Activated naive CD4-positive, alpha-beta T cell treated with anti-CD3 and anti-CD28 coated beads for 36 hours (primary cell): ENCODE measurements at regions of chr20 and their contacts with region 1.

Region 1: DNA sequence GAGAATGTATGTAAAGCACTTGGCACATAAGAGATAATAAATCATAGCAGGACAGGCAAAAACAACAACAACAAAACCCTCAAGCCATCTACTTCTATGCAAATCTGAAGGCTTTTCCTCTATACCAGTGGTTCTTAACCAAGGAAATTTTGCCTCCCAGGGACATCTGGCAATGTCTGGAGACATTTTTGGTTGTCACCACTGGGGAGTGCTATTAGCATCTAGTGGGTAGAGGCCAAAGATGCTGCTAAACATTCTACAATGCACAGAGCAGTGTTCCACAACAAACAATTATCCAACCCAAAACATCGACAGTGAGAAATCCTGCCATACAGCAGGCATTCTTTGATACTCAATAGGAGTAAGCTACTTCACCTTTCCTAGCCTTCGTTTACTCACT is 28.2 kb downstream of the NDRG3 start:
- DNase-seq: peak; percentile 43
- H3K4me3 Mint-ChIP-seq: no peak overlapping the region
- H3K27ac Mint-ChIP-seq: no peak overlapping the region
- H3K4me1 Mint-ChIP-seq: peaks cover 12% of the 10 kb centered on the region
- H3K27me3 Mint-ChIP-seq: no peaks in the 10 kb centered on the region

Region 2: GRCh38 chr20:36745927-36746659 is 28.4 kb after region 1 on chr20 and contains the start of gene NDRG3:
- CTCF ChIA-PET with region 1: no interaction called
- intact Hi-C with region 1: loop called (anchors 1 kb)
- DNase-seq: peak; percentile 96
- H3K4me3 Mint-ChIP-seq: peak within 1 kb of the TSS; percentile 86
- H3K27ac Mint-ChIP-seq: peak within 1 kb of the TSS; percentile 86
- H3K4me1 Mint-ChIP-seq: peaks cover 21% of the 10 kb centered on the region
- H3K27me3 Mint-ChIP-seq: no peaks in the 10 kb centered on the region
- total RNA-seq, gene NDRG3: 26.1 to 28.2 TPM

Region 3: DNA sequence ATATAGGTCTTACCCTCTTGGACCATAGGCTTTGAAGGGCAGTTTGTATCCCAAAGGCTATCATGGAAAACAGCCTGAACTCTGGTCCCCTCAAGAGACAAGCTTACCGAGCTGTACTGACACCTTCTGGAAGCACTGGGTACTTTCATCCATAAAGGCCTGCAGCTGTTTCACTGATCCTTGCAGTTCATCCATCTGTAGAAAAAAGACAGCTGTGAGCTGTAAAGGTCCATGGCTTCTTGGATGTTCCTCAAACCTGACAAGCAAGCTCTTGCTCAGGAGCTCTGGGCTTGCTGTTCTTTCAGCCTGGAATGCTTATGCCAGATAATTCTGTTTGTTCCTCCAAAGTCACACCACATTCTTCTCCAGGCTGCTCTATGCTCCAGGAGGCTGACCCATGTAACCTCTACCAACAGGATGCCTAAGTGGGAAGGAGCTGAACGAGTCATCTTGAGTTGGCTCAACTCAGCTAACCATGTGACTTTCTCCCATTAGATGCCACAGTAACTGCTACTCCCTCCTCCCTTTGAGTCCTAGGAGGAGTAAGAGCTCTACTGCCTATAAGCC is 37.1 kb after region 1 on chr20:
- CTCF ChIA-PET with region 1: interaction called, 3 read pairs
- intact Hi-C with region 1: loop called (anchors 1 kb)
- DNase-seq: peak; percentile 52
- H3K4me3 Mint-ChIP-seq: no peak overlapping the region
- H3K27ac Mint-ChIP-seq: no peak overlapping the region
- H3K4me1 Mint-ChIP-seq: peaks cover 6% of the 10 kb centered on the region
- H3K27me3 Mint-ChIP-seq: no peaks in the 10 kb centered on the region

Region 4: GRCh38 chr20:36773597-36774390 is 56.1 kb after region 1 on chr20 and contains the start of gene DSN1:
- CTCF ChIA-PET with region 1: no interaction called
- intact Hi-C with region 1: loop called (anchors 5 kb)
- DNase-seq: peak; percentile 98
- H3K4me3 Mint-ChIP-seq: peak within 1 kb of the TSS; percentile 97
- H3K27ac Mint-ChIP-seq: peak within 1 kb of the TSS; percentile 97
- H3K4me1 Mint-ChIP-seq: peaks cover 21% of the 10 kb centered on the region
- H3K27me3 Mint-ChIP-seq: no peaks in the 10 kb centered on the region
- total RNA-seq, gene DSN1: 23.0 to 24.7 TPM

Region 5: GRCh38 chr20:36808317-36809257 is 90.9 kb after region 1 on chr20:
- CTCF ChIA-PET with region 1: interaction called, 3 read pairs
- intact Hi-C with region 1: loop called (anchors 1 kb)
- DNase-seq: peak; percentile 87
- H3K4me3 Mint-ChIP-seq: no peak overlapping the region
- H3K27ac Mint-ChIP-seq: no peak overlapping the region
- H3K4me1 Mint-ChIP-seq: no peaks in the 10 kb centered on the region
- H3K27me3 Mint-ChIP-seq: no peaks in the 10 kb centered on the region

Region 6: GRCh38 chr20:36886859-36887751 is 169.4 kb after region 1 on chr20:
- CTCF ChIA-PET with region 1: interaction called, 3 read pairs
- intact Hi-C with region 1: loop called (anchors 5 kb)
- DNase-seq: peak; percentile 92
- H3K4me3 Mint-ChIP-seq: no peak overlapping the region
- H3K27ac Mint-ChIP-seq: peak overlapping the region; percentile 54
- H3K4me1 Mint-ChIP-seq: peaks cover 10% of the 10 kb centered on the region
- H3K27me3 Mint-ChIP-seq: no peaks in the 10 kb centered on the region